Endothelial cell of umbilical vein (primary cell): ENCODE measurements at regions of chr11 and their contacts with region 1.

Region 1: GRCh38 chr11:96389720-96390487 is at the starts of genes CCDC82 and JRKL:
- DNase-seq: peak; percentile 96
- H3K4me3 ChIP-seq: peak within 1 kb of the TSS; percentile 84 to 98 (median 94)
- H3K27ac ChIP-seq: peak within 1 kb of the TSS; percentile 61
- H3K4me1 ChIP-seq: peaks cover 19% of the 10 kb centered on the region
- H3K27me3 ChIP-seq: no peaks in the 10 kb centered on the region
- CTCF ChIP-seq: no peak
- POLR2A ChIP-seq: no peak
- total RNA-seq, gene CCDC82: 32.8 and 33.4 TPM in 2 replicates
- total RNA-seq, gene JRKL: 7.0 and 7.6 TPM in 2 replicates

Region 2: GRCh38 chr11:95790123-95790932 is 599.6 kb before region 1 on chr11 and contains the start of gene CEP57:
- CTCF ChIA-PET with region 1: interaction called, 40 read pairs
- POLR2A ChIA-PET with region 1: no interaction called
- dilution Hi-C with region 1: no loop called
- intact Hi-C with region 1: loop called (anchors 1 kb)
- DNase-seq: peak; percentile 97
- H3K4me3 ChIP-seq: peak within 1 kb of the TSS; percentile 75 to 85 (median 84)
- H3K27ac ChIP-seq: peak within 1 kb of the TSS; percentile 90
- H3K4me1 ChIP-seq: peaks cover 21% of the 10 kb centered on the region
- H3K27me3 ChIP-seq: no peaks in the 10 kb centered on the region
- CTCF ChIP-seq: no peak
- POLR2A ChIP-seq: peak; percentile 79
- total RNA-seq, gene CEP57: 35.2 and 38.5 TPM in 2 replicates

Region 3: GRCh38 chr11:95917193-95918036 is 472.5 kb before region 1 on chr11:
- CTCF ChIA-PET with region 1: interaction called, 9 read pairs
- POLR2A ChIA-PET with region 1: no interaction called
- dilution Hi-C with region 1: no loop called
- intact Hi-C with region 1: loop called (anchors 2 kb)
- DNase-seq: peak; percentile 97
- H3K4me3 ChIP-seq: peak overlapping the region in 1 of 3 experiments; percentile 17
- H3K27ac ChIP-seq: peak overlapping the region; percentile 77
- H3K4me1 ChIP-seq: peaks cover 54% of the 10 kb centered on the region
- H3K27me3 ChIP-seq: no peaks in the 10 kb centered on the region
- CTCF ChIP-seq: no peak
- POLR2A ChIP-seq: no peak

Region 4: DNA sequence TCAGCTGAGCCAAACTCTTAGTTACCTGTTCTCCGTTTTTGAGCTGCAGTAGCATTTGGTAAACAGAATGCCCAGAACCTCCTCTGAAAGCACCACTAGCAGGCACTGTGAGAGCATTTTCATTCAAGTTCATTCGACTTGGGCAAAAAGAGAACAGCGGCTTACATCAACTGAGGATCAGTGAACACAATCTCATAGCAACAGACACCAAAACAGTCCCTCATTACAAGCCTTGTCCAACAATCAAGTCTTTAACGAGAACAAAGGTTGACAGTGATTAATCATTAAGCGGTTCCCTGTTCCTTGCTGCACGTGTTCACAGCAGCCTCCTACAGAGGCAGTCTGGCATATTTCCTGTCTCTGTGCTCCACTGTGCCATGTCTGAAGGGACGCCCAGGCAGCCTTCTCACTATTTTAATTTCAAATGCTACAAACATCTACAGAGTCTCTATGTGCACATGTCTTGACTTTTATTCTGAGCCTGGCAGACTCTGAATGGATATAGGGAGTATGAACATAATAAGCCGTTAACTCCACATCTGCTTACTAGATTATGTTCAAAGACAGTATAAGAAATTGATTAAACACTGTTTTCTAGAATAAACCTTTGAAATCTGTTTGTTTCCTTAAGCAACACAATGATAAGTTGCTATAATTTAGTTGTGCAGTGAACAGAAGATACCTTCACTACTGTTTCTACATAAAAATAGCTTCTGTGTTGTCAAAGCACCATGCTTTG is 377.6 kb before region 1 on chr11:
- CTCF ChIA-PET with region 1: interaction called, 11 read pairs
- POLR2A ChIA-PET with region 1: no interaction called
- dilution Hi-C with region 1: no loop called
- intact Hi-C with region 1: loop called (anchors 1 kb)
- DNase-seq: peak; percentile 85
- H3K4me3 ChIP-seq: no peak overlapping the region
- H3K27ac ChIP-seq: no peak overlapping the region
- H3K4me1 ChIP-seq: peaks cover 8% of the 10 kb centered on the region
- H3K27me3 ChIP-seq: no peaks in the 10 kb centered on the region
- CTCF ChIP-seq: peak; percentile 50 to 58
- POLR2A ChIP-seq: no peak

Region 5: DNA sequence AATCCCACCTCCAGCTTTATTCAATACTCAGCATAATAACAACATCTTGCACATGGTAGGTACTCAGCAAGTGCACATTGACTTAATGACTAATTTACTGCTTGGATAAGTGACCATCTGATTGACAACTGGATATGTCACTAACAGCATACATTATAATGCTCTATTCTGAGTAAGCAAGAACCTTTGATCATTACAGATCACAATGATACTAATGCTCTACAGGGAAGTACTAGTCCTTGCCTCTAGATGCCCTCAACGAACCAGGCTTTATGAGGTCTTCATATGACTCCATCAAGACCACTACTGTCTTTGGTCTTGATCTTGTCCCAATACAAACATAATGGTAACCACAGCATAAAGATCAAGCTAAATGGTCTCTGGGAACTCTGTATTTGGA is 298.4 kb before region 1 on chr11:
- CTCF ChIA-PET with region 1: interaction called, 10 read pairs
- POLR2A ChIA-PET with region 1: no interaction called
- dilution Hi-C with region 1: no loop called
- intact Hi-C with region 1: no loop called
- DNase-seq: no peak
- H3K4me3 ChIP-seq: no peak overlapping the region
- H3K27ac ChIP-seq: no peak overlapping the region
- H3K4me1 ChIP-seq: no peaks in the 10 kb centered on the region
- H3K27me3 ChIP-seq: no peaks in the 10 kb centered on the region
- CTCF ChIP-seq: no peak
- POLR2A ChIP-seq: no peak

Region 6: GRCh38 chr11:96242971-96243647 is 146.8 kb before region 1 on chr11:
- CTCF ChIA-PET with region 1: interaction called, 7 read pairs
- POLR2A ChIA-PET with region 1: interaction called, 3 read pairs
- dilution Hi-C with region 1: no loop called
- intact Hi-C with region 1: loop called (anchors 1 kb)
- DNase-seq: peak; percentile 97
- H3K4me3 ChIP-seq: peak overlapping the region in 2 of 3 experiments; percentile 42 to 58
- H3K27ac ChIP-seq: peak overlapping the region; percentile 74
- H3K4me1 ChIP-seq: peaks cover 19% of the 10 kb centered on the region
- H3K27me3 ChIP-seq: no peaks in the 10 kb centered on the region
- CTCF ChIP-seq: no peak
- POLR2A ChIP-seq: peak; percentile 46

Region 7: GRCh38 chr11:96424693-96425092 is 34.8 kb after region 1 on chr11:
- CTCF ChIA-PET with region 1: interaction called, 16 read pairs
- POLR2A ChIA-PET with region 1: no interaction called
- dilution Hi-C with region 1: no loop called
- intact Hi-C with region 1: no loop called
- DNase-seq: peak; percentile 51
- H3K4me3 ChIP-seq: no peak overlapping the region
- H3K27ac ChIP-seq: no peak overlapping the region
- H3K4me1 ChIP-seq: peaks cover 2% of the 10 kb centered on the region
- H3K27me3 ChIP-seq: peaks cover 0 to 17% of the 10 kb centered on the region in 2 experiments
- CTCF ChIP-seq: no peak
- POLR2A ChIP-seq: no peak